Heart left ventricle (tissue), 16 donors: ENCODE measurements at regions of chr3 and their contacts with region 1.

Region 1: GRCh38 chr3:195442573-195443390 is at the start of gene ACAP2:
- DNase-seq: peak; percentile 100
- ATAC-seq: peak; percentile 98 to 99 (median 99)
- H3K4me3 ChIP-seq: peak within 1 kb of the TSS; percentile 54 to 100 (median 94)
- H3K27ac ChIP-seq: peak within 1 kb of the TSS; percentile 47 to 99 (median 96)
- H3K4me1 ChIP-seq: peaks cover 3 to 33% (median 23%) of the 10 kb centered on the region in 12 donors
- H3K27me3 ChIP-seq: no peaks in the 10 kb centered on the region
- CTCF ChIP-seq: no peak
- POLR2A ChIP-seq: peak; percentile 71 to 98
- total RNA-seq, gene ACAP2: 12.5 to 39.2 (median 16.3) TPM

Region 2: DNA sequence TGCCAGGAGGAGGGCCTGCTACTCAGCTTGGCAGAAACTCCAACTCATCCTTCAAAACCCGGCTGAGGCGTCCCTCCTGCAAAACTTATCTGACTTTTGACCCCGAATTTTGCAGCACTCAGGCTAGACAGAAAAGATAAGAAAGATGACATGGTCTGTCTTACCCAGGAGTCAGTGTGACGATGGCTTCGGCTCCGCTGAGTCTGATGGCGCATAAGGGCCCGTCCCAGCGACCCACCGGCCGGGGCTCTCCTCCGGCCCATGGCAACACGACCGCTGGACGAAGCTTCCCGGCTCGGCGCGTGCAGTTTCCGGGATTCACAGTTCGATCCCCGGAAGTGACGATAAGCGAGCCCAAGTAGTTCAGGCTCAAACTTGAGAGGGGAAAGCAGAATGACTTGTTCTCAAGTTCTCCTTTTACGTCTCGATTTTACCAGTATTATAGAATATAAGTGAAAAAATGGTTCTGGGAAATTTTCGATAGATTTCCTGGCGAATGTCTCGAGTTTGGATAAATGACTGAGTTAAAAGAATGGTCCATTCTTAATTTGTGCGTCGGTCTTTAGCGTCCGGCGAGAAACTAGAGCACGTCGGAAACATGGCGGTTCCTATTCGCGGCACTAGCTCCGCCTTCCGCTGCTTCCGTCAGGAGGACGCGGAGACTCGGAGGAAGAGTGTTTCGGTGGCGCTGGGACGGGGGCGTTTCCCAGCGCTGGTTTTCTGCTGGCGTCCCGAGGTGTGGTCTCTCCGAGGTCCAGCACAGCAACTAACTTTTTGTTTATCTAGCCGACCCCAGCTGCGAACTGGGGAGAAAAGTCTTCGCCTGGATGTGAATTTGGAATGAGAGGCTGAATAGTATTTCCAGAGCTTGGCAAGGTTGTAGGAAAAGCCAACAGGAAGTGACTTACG is 770.6 kb before region 1 on chr3 and contains the start of gene LSG1:
- intact Hi-C with region 1: loop called in 1 of 10 experiments (anchors 5 kb)
- DNase-seq: peak; percentile 92 to 95 (median 94)
- ATAC-seq: peak; percentile 92 to 97 (median 95)
- H3K4me3 ChIP-seq: peak within 1 kb of the TSS; percentile 67 to 93 (median 82)
- H3K27ac ChIP-seq: peak within 1 kb of the TSS; percentile 90 to 98 (median 94)
- H3K4me1 ChIP-seq: peaks cover 0 to 36% (median 17%) of the 10 kb centered on the region in 12 donors
- H3K27me3 ChIP-seq: no peaks in the 10 kb centered on the region
- CTCF ChIP-seq: peak in 1 of 12 donors; percentile 5
- POLR2A ChIP-seq: peak in 1 of 2 donors; percentile 39
- total RNA-seq, gene LSG1: 13.7 to 22.2 (median 18.9) TPM

Region 3: DNA sequence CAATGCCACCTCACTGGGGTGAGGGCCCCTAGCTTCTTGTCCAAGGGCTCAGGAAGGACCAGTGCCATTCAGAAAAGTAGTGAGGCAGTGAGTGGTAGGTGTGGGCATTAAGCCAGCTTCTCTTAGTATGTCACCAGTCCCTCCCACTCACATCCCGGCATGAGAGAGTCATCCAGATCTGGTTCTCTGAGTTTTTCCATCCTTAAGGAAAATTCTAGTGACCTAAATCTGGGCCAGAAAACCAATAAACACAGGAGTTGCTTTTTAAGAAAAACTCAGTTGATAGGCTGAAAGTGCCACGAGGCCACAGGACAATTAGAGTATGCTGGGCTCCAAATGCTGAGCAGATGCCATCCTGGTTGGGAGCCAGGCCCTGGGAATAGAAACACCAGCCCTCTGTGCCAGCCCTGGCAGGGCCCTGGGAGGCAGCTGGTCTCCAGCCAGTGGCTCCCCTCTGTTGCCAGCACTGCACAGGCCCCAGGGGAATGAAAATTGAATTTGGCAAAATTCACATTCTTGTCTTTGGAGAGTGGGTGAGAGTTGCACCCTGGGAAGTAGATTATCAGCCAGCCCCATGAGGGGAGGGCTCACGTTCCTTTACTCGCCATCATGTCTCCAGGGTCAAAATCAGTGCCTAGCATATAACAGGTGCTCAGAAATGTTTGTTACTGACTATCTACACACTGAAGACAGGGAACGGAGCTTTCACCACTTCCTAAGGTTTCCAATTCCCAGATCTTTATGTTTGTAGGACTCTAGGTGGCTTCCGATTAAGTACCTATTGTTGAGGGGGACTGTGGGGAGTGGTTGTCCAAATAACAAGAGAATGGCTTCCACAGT is 704.3 kb before region 1 on chr3:
- intact Hi-C with region 1: no loop called
- DNase-seq: peak; percentile 75 to 87 (median 78)
- ATAC-seq: peak; percentile 97 to 99 (median 98)
- H3K4me3 ChIP-seq: no peak overlapping the region
- H3K27ac ChIP-seq: peak overlapping the region in 10 of 12 donors; percentile 27 to 68 (median 46)
- H3K4me1 ChIP-seq: peaks cover 0 to 41% (median 22%) of the 10 kb centered on the region in 12 donors
- H3K27me3 ChIP-seq: no peaks in the 10 kb centered on the region
- CTCF ChIP-seq: no peak
- POLR2A ChIP-seq: no peak

Region 4: DNA sequence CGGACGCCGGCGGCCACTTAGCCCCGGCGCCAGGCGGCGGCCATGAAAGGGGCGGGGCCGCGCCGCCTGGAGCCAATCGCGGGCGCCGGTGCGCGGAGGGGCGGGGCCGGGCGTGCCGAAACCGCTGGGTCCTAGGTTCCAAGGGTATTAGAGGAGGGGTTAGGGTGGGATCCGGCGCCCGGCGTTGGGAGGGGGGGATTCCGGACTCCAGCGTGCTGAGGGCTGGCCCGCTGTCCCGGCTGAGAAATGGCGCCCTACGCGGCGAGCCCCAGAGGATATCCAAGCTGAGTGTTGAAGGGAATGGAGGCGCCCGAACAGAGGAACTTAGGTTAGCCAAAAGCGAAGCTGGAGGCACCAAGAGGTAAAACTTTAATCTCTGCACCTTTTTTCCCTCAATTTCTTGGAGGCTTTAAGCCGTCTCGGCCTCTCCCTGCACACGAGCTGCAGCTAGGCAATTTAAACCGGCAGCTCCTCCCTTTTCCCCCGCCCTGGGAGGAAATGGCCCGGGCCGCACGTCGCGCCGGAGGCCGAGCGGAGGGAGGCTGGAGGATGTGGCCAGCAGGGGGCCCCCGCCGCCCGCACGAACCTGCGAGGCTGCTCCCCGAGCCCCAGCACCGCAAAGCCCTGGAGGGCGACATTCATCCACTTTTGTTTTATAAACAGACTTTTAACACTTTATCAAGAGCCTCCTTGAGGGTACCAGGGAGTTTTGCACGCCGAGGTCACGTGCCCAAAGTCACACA is 171.5 kb before region 1 on chr3 and contains the start of gene XXYLT1:
- intact Hi-C with region 1: loop called in 4 of 10 experiments (anchors 5 to 10 kb)
- DNase-seq: peak; percentile 90 to 95 (median 92)
- ATAC-seq: peak; percentile 92 to 98 (median 95)
- H3K4me3 ChIP-seq: peak within 1 kb of the TSS; percentile 61 to 98 (median 86)
- H3K27ac ChIP-seq: peak within 1 kb of the TSS; percentile 51 to 96 (median 90)
- H3K4me1 ChIP-seq: peaks cover 0 to 28% (median 16%) of the 10 kb centered on the region in 12 donors
- H3K27me3 ChIP-seq: no peaks in the 10 kb centered on the region
- CTCF ChIP-seq: peak; percentile 93 to 99 (median 96)
- POLR2A ChIP-seq: peak in 1 of 2 donors; percentile 52
- total RNA-seq, gene XXYLT1: 2.1 to 8.6 (median 5.5) TPM

Region 5: GRCh38 chr3:195319060-195319459 is 123.7 kb before region 1 on chr3:
- intact Hi-C with region 1: loop called in 1 of 10 experiments (anchors 10 kb)
- DNase-seq: no peak
- ATAC-seq: no peak
- H3K4me3 ChIP-seq: no peak overlapping the region
- H3K27ac ChIP-seq: no peak overlapping the region
- H3K4me1 ChIP-seq: no peaks in the 10 kb centered on the region
- H3K27me3 ChIP-seq: no peaks in the 10 kb centered on the region
- CTCF ChIP-seq: no peak
- POLR2A ChIP-seq: no peak

Region 6: DNA sequence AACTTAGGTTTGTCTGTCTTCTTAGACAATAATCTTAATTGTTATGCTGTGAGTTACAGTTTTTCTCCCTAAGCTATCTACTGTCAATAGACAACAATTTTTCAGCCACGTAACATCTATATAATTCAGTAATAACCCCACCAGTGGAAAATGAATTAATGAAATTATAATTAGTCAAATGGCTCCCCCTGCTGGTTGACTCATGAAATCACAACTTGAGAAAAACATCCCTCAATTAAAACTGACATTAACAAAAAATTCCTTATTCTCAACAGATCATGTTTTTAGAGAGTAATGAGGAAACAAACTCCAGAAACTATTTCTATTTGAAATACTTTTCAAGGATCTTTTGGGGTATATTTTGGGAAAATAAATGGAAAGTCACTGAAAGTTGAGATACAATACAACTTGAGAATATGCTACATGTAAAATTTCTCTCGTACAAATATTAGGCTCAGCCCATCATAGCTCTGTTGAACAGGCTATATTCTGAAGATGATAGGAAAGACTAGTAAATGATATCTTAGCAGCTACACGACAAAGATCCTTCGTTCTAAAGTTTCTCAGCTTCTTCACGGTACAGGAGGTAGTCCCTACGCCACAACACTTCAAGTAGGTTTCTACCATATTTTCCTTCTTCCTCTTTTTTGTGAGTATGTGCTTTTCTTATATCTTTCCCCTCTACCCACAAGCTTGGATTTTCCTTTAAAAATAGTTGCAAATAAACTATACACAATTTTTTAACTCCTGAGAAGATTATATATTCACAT is 79.7 kb after region 1 on chr3:
- intact Hi-C with region 1: loop called in 1 of 10 experiments (anchors 10 kb)
- DNase-seq: no peak
- ATAC-seq: no peak
- H3K4me3 ChIP-seq: no peak overlapping the region
- H3K27ac ChIP-seq: no peak overlapping the region
- H3K4me1 ChIP-seq: peaks cover 0 to 6% (median 0%) of the 10 kb centered on the region in 12 donors
- H3K27me3 ChIP-seq: no peaks in the 10 kb centered on the region
- CTCF ChIP-seq: peak; percentile 69 to 93 (median 78)
- POLR2A ChIP-seq: no peak